A673 (cell line): ENCODE measurements at regions of chr9 and their contacts with region 1.

Region 1: GRCh38 chr9:123863164-123863855 is 66.6 kb downstream of the DENND1A start:
- DNase-seq: peak; percentile 94
- H3K4me3 ChIP-seq: no peak overlapping the region
- H3K27ac ChIP-seq: no peak overlapping the region
- H3K4me1 ChIP-seq: peaks cover 24% of the 10 kb centered on the region
- H3K27me3 ChIP-seq: peaks cover 87% of the 10 kb centered on the region
- CTCF ChIP-seq: no peak

Region 2: GRCh38 chr9:123927625-123928532 is 64.6 kb after region 1 on chr9:
- CTCF ChIA-PET with region 1: no interaction called
- POLR2A ChIA-PET with region 1: no interaction called
- intact Hi-C with region 1: loop called (anchors 2 kb)
- DNase-seq: peak; percentile 78
- H3K4me3 ChIP-seq: peak overlapping the region; percentile 61
- H3K27ac ChIP-seq: no peak overlapping the region
- H3K4me1 ChIP-seq: peaks cover 44% of the 10 kb centered on the region
- H3K27me3 ChIP-seq: peaks cover 8% of the 10 kb centered on the region
- CTCF ChIP-seq: no peak

Region 3: GRCh38 chr9:124011420-124012301 is 148.4 kb after region 1 on chr9 and contains the start of gene LHX2:
- CTCF ChIA-PET with region 1: no interaction called
- POLR2A ChIA-PET with region 1: no interaction called
- intact Hi-C with region 1: loop called (anchors 10 kb)
- DNase-seq: peak; percentile 90
- H3K4me3 ChIP-seq: peak within 1 kb of the TSS; percentile 26
- H3K27ac ChIP-seq: no peak within 1 kb of the TSS
- H3K4me1 ChIP-seq: peaks cover 4% of the 10 kb centered on the region
- H3K27me3 ChIP-seq: peaks cover 98% of the 10 kb centered on the region
- CTCF ChIP-seq: no peak
- total RNA-seq, gene LHX2: 0.17 and 0.26 TPM in 2 replicates

Region 4: GRCh38 chr9:124054582-124055227 is 191.4 kb after region 1 on chr9:
- CTCF ChIA-PET with region 1: no interaction called
- POLR2A ChIA-PET with region 1: no interaction called
- intact Hi-C with region 1: no loop called
- DNase-seq: no peak
- H3K4me3 ChIP-seq: no peak overlapping the region
- H3K27ac ChIP-seq: no peak overlapping the region
- H3K4me1 ChIP-seq: no peaks in the 10 kb centered on the region
- H3K27me3 ChIP-seq: peaks cover 4% of the 10 kb centered on the region
- CTCF ChIP-seq: no peak

Region 5: GRCh38 chr9:124079176-124079925 is 216.0 kb after region 1 on chr9:
- CTCF ChIA-PET with region 1: no interaction called
- POLR2A ChIA-PET with region 1: no interaction called
- intact Hi-C with region 1: no loop called
- DNase-seq: peak; percentile 41
- H3K4me3 ChIP-seq: no peak overlapping the region
- H3K27ac ChIP-seq: no peak overlapping the region
- H3K4me1 ChIP-seq: no peaks in the 10 kb centered on the region
- H3K27me3 ChIP-seq: peaks cover 11% of the 10 kb centered on the region
- CTCF ChIP-seq: no peak

Region 6: GRCh38 chr9:124126571-124127289 is 263.4 kb after region 1 on chr9:
- CTCF ChIA-PET with region 1: no interaction called
- POLR2A ChIA-PET with region 1: no interaction called
- intact Hi-C with region 1: no loop called
- DNase-seq: peak; percentile 74
- H3K4me3 ChIP-seq: no peak overlapping the region
- H3K27ac ChIP-seq: no peak overlapping the region
- H3K4me1 ChIP-seq: no peaks in the 10 kb centered on the region
- H3K27me3 ChIP-seq: no peaks in the 10 kb centered on the region
- CTCF ChIP-seq: peak; percentile 96